ENCODE measurements at regions of chr17 and their contacts with region 1.

Region 1: GRCh38 chr17:44533533-44534246 is 23.6 kb upstream of the FZD2 start:
- DNase-seq: peak; percentile 94

Region 2: DNA sequence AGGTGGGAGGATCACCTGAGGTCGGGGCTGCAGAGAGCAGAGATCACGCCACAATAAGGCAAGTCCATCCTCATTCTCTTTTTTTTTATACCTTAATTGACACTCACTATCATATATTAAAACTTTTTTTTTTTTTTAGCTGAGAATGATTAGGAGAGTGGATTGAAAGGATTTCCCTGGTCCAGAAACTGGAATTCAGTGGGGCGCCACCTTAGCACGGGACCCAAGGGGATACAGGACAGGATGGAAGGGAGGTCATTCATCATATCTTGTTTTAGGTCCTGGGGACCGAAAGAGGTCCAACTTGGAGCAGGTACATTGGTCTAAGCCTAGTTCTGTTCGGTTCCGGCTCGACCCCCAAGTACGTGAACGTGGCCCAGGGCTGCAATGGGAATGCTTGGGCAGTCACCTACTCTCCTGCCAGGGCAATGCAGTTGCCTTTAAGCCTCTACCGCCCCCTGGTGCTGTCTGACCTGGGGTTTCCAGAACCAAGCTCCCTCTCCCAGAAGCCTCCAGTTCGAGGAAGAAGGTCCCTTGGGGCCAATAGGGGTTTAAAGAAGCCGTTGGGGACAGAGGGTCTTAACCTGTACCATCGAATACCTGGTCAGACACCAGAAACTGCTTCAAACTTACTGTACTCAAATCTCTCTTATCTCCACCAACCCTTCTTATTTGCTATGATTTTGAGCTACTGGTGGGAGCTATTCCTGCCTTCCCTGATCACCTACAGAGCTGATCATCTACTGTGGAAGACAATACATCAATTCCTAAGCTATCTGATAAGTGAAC is 10.6 kb before region 1 on chr17:
- CTCF ChIA-PET with region 1: interaction called, 28 read pairs
- POLR2A ChIA-PET with region 1: interaction called, 3 read pairs
- DNase-seq: peak; percentile 84

Region 3: DNA sequence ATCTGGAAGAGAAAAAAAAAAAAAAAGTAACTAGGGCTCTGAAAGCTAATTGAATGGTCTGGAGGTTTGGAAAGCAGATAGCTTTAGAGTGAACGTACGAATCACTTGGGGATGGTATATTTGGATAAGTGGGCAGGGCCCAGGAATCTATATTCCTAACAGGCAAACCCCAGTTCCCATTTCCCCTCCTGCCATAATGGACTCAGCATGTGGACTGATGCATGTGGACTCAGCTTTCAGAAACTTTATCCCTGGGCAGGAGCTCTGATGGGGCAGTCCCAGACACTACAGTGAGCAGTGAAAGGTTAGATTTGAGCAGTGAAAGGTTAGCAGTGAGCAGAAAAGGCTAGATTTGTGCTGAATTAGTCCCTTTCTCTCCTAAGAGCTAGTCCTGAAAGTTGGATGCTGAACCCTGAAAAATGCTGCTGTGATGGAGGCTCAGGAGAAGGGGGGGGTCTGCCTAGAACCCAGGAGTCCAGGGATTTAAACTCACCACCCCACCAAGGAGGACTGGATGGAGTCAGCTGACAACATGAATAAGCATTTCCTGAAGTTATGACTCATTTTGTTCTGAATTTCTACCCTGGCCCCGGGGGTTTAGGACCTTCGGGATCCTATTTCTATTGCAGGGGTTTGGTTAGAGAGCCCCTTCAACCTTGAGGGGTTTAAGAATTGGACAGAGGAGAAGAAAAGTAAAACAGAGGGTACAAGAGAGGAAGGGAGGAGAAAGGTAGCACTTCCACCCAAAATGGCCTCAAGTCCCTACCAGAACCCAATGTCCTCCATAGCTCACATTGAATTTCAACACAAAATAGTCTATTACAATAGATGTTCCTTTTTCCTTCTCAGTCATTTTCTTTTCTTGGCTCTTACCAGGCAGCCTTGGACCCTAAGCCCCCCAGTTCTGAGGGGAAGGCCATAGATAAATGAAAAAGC is 13.2 kb after region 1 on chr17:
- CTCF ChIA-PET with region 1: interaction called, 13 read pairs
- POLR2A ChIA-PET with region 1: interaction called, 4 read pairs
- DNase-seq: no peak

Region 4: GRCh38 chr17:44599298-44600175 is 65.8 kb after region 1 on chr17:
- CTCF ChIA-PET with region 1: no interaction called
- POLR2A ChIA-PET with region 1: no interaction called
- DNase-seq: no peak

Region 5: GRCh38 chr17:44627513-44628242 is 94.0 kb after region 1 on chr17:
- CTCF ChIA-PET with region 1: interaction called, 10 read pairs
- POLR2A ChIA-PET with region 1: interaction called, 4 read pairs
- DNase-seq: no peak

Region 6: GRCh38 chr17:44636562-44636961 is 102.9 kb after region 1 on chr17:
- CTCF ChIA-PET with region 1: interaction called, 32 read pairs
- POLR2A ChIA-PET with region 1: interaction called, 6 read pairs
- DNase-seq: no peak

Region 7: DNA sequence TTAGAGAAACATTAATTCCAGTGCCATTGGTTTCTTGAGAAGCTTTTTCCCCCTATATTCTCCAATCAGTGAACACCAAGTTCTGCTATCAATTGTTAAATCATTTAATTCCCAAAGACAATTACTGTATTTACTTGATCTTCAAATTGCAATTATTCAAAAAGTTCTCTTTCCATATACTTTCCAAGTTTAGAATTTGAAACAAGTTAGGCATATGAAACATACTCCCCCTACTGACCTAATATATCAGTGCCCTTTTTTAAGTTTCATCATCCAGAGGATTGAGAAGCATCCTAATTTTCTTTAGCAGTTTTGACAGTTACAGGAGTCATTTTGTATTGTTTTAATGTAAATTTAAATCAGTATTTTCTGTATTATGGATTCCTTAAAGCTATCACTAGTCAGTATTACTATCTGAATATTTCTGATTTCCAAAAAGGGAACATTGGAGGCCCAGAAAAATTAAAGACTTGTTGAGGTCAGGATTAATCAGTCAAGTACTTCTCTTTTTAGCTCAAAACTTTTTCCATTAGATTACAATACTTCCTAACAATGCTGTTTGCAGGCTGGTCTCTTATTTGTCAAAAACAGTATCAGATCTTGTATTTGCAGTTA is 138.9 kb after region 1 on chr17:
- CTCF ChIA-PET with region 1: interaction called, 10 read pairs
- POLR2A ChIA-PET with region 1: no interaction called
- DNase-seq: no peak

Region 8: GRCh38 chr17:44749076-44749979 is 215.6 kb after region 1 on chr17:
- CTCF ChIA-PET with region 1: no interaction called
- POLR2A ChIA-PET with region 1: no interaction called
- DNase-seq: no peak

Measured in HEK293T (cell line).